HepG2 (cell line): ENCODE measurements at regions of chr15 and their contacts with region 1.

Region 1: DNA sequence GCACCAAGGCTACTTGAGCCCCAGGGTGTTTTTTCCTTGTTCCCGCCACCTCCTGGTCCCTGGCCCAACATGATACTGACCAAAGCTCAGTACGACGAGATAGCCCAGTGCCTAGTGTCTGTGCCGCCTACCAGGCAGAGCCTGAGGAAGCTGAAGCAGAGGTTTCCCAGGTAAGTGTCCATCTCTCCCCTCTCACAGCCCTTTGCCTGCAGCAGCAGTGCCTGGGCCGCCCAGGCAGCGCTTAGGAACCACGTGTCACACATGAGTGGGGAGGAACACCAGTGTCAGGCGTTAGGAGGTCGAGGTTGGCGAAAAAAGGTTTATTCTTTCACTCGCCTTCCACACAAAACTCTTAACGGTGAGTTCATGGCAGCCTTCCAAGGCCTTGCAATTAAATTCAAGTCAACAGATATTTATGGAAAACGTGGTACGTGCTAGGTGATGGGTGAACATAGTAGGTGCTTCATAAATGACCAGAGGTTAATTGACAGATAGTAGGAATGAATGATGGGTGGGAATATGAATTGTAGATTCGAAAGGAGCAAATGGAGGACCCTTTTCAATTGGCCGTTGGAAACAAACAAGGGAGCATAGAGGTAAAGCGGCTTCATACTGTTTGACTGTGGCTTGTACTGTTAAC is 486 bp downstream of the CDIN1 start:
- DNase-seq: peak; percentile 3
- ATAC-seq: peak; percentile 78
- H3K4me3 ChIP-seq: peak overlapping the region; percentile 65 to 84 (median 79); a peak in 5 of 6 replicates
- H3K27ac ChIP-seq: peak overlapping the region; percentile 91
- H3K4me1 ChIP-seq: peaks cover 34% of the 10 kb centered on the region
- H3K27me3 ChIP-seq: peaks cover 0 to 4% of the 10 kb centered on the region in 2 experiments; a peak in 1 of 5 replicates
- CTCF ChIP-seq: no peak
- EP300 ChIP-seq: no peak
- POLR2A ChIP-seq: no peak
- RAD21 ChIP-seq: no peak

Region 2: GRCh38 chr15:36432161-36432560 is 147.8 kb before region 1 on chr15:
- CTCF ChIA-PET with region 1: no interaction called
- POLR2A ChIA-PET with region 1: no interaction called
- in situ Hi-C with region 1: no loop called
- intact Hi-C with region 1: no loop called
- DNase-seq: no peak
- ATAC-seq: no peak
- H3K4me3 ChIP-seq: no peak overlapping the region
- H3K27ac ChIP-seq: no peak overlapping the region
- H3K4me1 ChIP-seq: peaks cover 8% of the 10 kb centered on the region; the same call in 1 of the 2 replicates
- H3K27me3 ChIP-seq: peaks cover 0 to 1% of the 10 kb centered on the region in 2 experiments; a peak in 1 of 5 replicates
- CTCF ChIP-seq: no peak
- EP300 ChIP-seq: no peak
- POLR2A ChIP-seq: no peak
- RAD21 ChIP-seq: no peak

Region 3: GRCh38 chr15:36506733-36507356 is 73.1 kb before region 1 on chr15:
- CTCF ChIA-PET with region 1: no interaction called
- POLR2A ChIA-PET with region 1: no interaction called
- in situ Hi-C with region 1: no loop called
- intact Hi-C with region 1: loop called (anchors 2 kb)
- DNase-seq: peak; percentile 97
- ATAC-seq: peak; percentile 100
- H3K4me3 ChIP-seq: no peak overlapping the region
- H3K27ac ChIP-seq: no peak overlapping the region
- H3K4me1 ChIP-seq: peaks cover 38% of the 10 kb centered on the region
- H3K27me3 ChIP-seq: peaks cover 0 to 63% of the 10 kb centered on the region in 2 experiments; a peak in 3 of 5 replicates
- CTCF ChIP-seq: no peak
- EP300 ChIP-seq: peak; percentile 93 to 96
- POLR2A ChIP-seq: no peak
- RAD21 ChIP-seq: no peak

Region 4: DNA sequence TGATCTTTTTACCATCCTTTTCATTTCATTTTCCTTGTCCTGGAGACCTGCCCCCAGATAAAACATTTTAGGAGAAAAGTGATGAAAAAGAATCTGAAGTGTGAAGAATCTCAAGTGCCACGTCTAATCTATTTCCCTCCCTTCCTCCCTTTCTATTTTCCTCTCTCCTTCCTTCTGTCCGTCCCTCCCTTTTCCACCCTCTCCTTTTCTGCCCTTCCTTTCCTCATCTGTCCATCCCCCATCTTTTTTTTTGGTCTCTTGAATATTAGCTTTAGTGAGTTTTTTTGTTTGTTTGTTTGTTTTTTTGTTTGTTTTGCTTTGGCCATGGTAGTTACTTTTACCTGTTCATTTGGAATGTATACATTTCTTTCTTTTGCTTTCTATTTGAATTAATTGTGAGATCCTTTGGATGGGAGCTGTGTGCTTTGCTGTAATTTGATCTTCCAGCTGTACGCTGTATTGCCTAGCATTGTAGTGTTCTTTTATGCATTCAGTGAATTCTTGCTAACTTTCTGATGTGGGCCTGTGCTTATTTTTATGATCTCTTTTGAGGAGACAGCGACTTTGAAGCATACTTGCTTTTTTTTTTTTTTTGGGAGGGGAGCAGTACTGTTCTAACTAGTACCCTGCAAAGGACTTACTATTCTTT is 18.7 kb after region 1 on chr15:
- CTCF ChIA-PET with region 1: no interaction called
- POLR2A ChIA-PET with region 1: no interaction called
- in situ Hi-C with region 1: no loop called
- intact Hi-C with region 1: no loop called
- DNase-seq: no peak
- ATAC-seq: no peak
- H3K4me3 ChIP-seq: no peak overlapping the region
- H3K27ac ChIP-seq: no peak overlapping the region
- H3K4me1 ChIP-seq: no peaks in the 10 kb centered on the region
- H3K27me3 ChIP-seq: no peaks in the 10 kb centered on the region
- CTCF ChIP-seq: no peak
- EP300 ChIP-seq: no peak
- POLR2A ChIP-seq: no peak
- RAD21 ChIP-seq: no peak

Region 5: GRCh38 chr15:37361621-37362020 is 781.7 kb after region 1 on chr15:
- CTCF ChIA-PET with region 1: no interaction called
- POLR2A ChIA-PET with region 1: no interaction called
- in situ Hi-C with region 1: no loop called
- intact Hi-C with region 1: no loop called
- DNase-seq: no peak
- ATAC-seq: no peak
- H3K4me3 ChIP-seq: no peak overlapping the region
- H3K27ac ChIP-seq: no peak overlapping the region
- H3K4me1 ChIP-seq: no peaks in the 10 kb centered on the region
- H3K27me3 ChIP-seq: no peaks in the 10 kb centered on the region
- CTCF ChIP-seq: no peak
- EP300 ChIP-seq: no peak
- POLR2A ChIP-seq: no peak
- RAD21 ChIP-seq: no peak